ENCODE measurements at regions of chr10 and their contacts with region 1.

Region 1: GRCh38 chr10:102713814-102714620 is at the start of gene ARL3:
- DNase-seq: peak; percentile 96
- ATAC-seq: peak; percentile 87
- H3K4me3 ChIP-seq: peak within 1 kb of the TSS; percentile 67 to 94 (median 70)
- H3K4me3 Mint-ChIP-seq: peak within 1 kb of the TSS; percentile 92
- H3K27ac ChIP-seq: peak within 1 kb of the TSS; percentile 64 to 92
- H3K27ac Mint-ChIP-seq: peak within 1 kb of the TSS; percentile 93
- H3K4me1 ChIP-seq: peaks cover 15 to 21% of the 10 kb centered on the region in 2 donors
- H3K4me1 Mint-ChIP-seq: peaks cover 36% of the 10 kb centered on the region
- H3K27me3 ChIP-seq: no peaks in the 10 kb centered on the region
- H3K27me3 Mint-ChIP-seq: no peaks in the 10 kb centered on the region
- CTCF ChIP-seq: peak; percentile 72
- total RNA-seq, gene ARL3: 5.5 and 6.3 TPM in 2 replicates

Region 2: GRCh38 chr10:101042667-101043355 is 1671.2 kb before region 1 on chr10:
- CTCF ChIA-PET with region 1: no interaction called
- POLR2A ChIA-PET with region 1: interaction called, 10 read pairs
- intact Hi-C with region 1: no loop called
- DNase-seq: peak; percentile 88
- ATAC-seq: peak; percentile 90
- H3K4me3 ChIP-seq: peak overlapping the region; percentile 50 to 76 (median 68)
- H3K4me3 Mint-ChIP-seq: peak overlapping the region; percentile 100
- H3K27ac ChIP-seq: peak overlapping the region in 1 of 2 donors; percentile 76
- H3K27ac Mint-ChIP-seq: peak overlapping the region; percentile 90
- H3K4me1 ChIP-seq: peaks cover 6 to 15% of the 10 kb centered on the region in 2 donors
- H3K4me1 Mint-ChIP-seq: peaks cover 17% of the 10 kb centered on the region
- H3K27me3 ChIP-seq: peaks cover 0 to 22% (median 6%) of the 10 kb centered on the region in 4 experiments
- H3K27me3 Mint-ChIP-seq: peaks cover 19% of the 10 kb centered on the region
- CTCF ChIP-seq: no peak

Region 3: DNA sequence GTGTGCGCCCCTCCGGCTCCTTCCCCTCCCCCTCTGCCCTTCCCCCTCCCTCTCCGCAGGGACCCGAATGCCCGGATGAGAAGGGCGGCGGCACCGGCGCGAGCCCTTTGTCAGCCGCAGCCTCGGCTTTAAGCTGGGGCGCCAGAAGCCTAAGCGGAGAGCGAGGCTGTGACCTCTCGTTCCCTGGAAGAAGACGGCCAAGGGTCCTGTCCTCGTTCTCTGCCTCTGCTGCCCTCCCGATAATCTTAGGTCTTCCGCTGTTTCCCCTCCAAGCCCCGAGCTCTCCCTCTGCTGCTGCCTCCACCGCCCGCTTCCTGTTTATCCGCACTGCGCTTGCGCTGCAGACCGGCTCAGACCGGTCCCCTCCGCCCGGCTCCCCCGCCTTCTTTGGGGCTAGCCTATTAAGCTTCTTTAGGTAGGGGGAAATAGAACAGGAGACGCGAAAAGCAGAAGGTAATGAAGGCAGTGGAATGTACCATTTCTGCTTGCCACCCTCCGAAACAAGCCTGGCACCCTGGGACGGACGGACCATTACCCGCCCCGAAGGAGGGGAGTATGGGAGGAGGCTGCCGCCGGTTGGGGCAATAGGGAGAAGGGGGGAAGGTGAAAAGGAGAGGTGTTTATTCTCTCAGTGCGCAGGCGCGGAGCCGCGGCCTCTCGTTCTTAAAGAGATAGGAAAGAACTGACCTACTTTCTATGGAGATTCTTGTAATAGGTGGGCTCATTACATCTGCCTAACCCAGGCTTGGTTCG is 895.7 kb before region 1 on chr10 and contains the start of gene OGA:
- CTCF ChIA-PET with region 1: no interaction called
- POLR2A ChIA-PET with region 1: interaction called, 3 read pairs
- intact Hi-C with region 1: loop called (anchors 5 kb)
- DNase-seq: peak; percentile 98
- ATAC-seq: peak; percentile 87
- H3K4me3 ChIP-seq: peak within 1 kb of the TSS; percentile 56 to 97 (median 92)
- H3K4me3 Mint-ChIP-seq: peak within 1 kb of the TSS; percentile 94
- H3K27ac ChIP-seq: peak within 1 kb of the TSS; percentile 81 to 85
- H3K27ac Mint-ChIP-seq: peak within 1 kb of the TSS; percentile 99
- H3K4me1 ChIP-seq: peaks cover 27% of the 10 kb centered on the region in 2 donors
- H3K4me1 Mint-ChIP-seq: peaks cover 35% of the 10 kb centered on the region
- H3K27me3 ChIP-seq: no peaks in the 10 kb centered on the region
- H3K27me3 Mint-ChIP-seq: no peaks in the 10 kb centered on the region
- CTCF ChIP-seq: no peak
- total RNA-seq, gene OGA: 418 and 442 TPM in 2 replicates

Region 4: GRCh38 chr10:102245101-102245931 is 468.7 kb before region 1 on chr10 and contains the start of gene GBF1:
- CTCF ChIA-PET with region 1: no interaction called
- POLR2A ChIA-PET with region 1: no interaction called
- intact Hi-C with region 1: loop called (anchors 5 kb)
- DNase-seq: peak; percentile 98
- ATAC-seq: peak; percentile 86
- H3K4me3 ChIP-seq: peak within 1 kb of the TSS; percentile 80 to 99 (median 98)
- H3K4me3 Mint-ChIP-seq: peak within 1 kb of the TSS; percentile 94
- H3K27ac ChIP-seq: peak within 1 kb of the TSS; percentile 86 to 90
- H3K27ac Mint-ChIP-seq: peak within 1 kb of the TSS; percentile 38
- H3K4me1 ChIP-seq: peaks cover 50 to 51% of the 10 kb centered on the region in 2 donors
- H3K4me1 Mint-ChIP-seq: peaks cover 56% of the 10 kb centered on the region
- H3K27me3 ChIP-seq: peaks cover 0 to 31% (median 27%) of the 10 kb centered on the region in 4 experiments
- H3K27me3 Mint-ChIP-seq: peaks cover 23% of the 10 kb centered on the region
- CTCF ChIP-seq: no peak
- total RNA-seq, gene GBF1: 39.3 and 41.2 TPM in 2 replicates

Region 5: DNA sequence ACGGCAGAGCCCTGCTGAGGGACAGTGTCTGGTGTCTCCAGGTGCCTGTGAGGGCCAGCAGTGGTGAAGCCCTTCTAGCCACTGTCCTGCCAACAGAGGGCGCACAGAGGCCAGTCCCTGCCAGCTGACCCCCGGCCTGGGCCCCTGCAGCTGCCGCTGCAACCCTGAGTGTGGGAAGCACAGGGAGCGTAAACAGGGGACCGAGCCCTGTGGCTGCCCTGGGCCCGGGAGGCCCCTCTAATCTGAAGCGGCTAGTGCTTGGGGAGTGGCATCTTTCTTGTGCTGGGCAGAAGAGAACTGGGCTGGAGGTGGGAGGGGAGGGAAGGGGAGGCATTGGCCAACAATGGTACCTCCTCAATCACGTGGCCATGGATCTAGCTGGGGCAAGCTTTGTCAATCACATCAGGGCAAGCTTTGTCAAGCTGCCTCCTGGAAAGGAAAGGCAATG is 35.2 kb before region 1 on chr10:
- CTCF ChIA-PET with region 1: interaction called, 38 read pairs
- POLR2A ChIA-PET with region 1: interaction called, 4 read pairs
- intact Hi-C with region 1: loop called (anchors 5 kb)
- DNase-seq: peak; percentile 33
- ATAC-seq: peak; percentile 48
- H3K4me3 ChIP-seq: no peak overlapping the region
- H3K4me3 Mint-ChIP-seq: no peak overlapping the region
- H3K27ac ChIP-seq: peak overlapping the region in 1 of 2 donors; percentile 2
- H3K27ac Mint-ChIP-seq: no peak overlapping the region
- H3K4me1 ChIP-seq: peaks cover 24 to 27% of the 10 kb centered on the region in 2 donors
- H3K4me1 Mint-ChIP-seq: peaks cover 33% of the 10 kb centered on the region
- H3K27me3 ChIP-seq: no peaks in the 10 kb centered on the region
- H3K27me3 Mint-ChIP-seq: no peaks in the 10 kb centered on the region
- CTCF ChIP-seq: no peak

Region 6: GRCh38 chr10:102743588-102744373 is 29.8 kb after region 1 on chr10 and contains the start of gene WBP1L:
- CTCF ChIA-PET with region 1: interaction called, 14 read pairs
- POLR2A ChIA-PET with region 1: interaction called, 4 read pairs
- intact Hi-C with region 1: loop called (anchors 1 kb)
- DNase-seq: peak; percentile 98
- ATAC-seq: peak; percentile 95
- H3K4me3 ChIP-seq: peak within 1 kb of the TSS; percentile 70 to 96 (median 89)
- H3K4me3 Mint-ChIP-seq: peak within 1 kb of the TSS; percentile 89
- H3K27ac ChIP-seq: peak within 1 kb of the TSS; percentile 58 to 86
- H3K27ac Mint-ChIP-seq: peak within 1 kb of the TSS; percentile 88
- H3K4me1 ChIP-seq: peaks cover 24 to 25% of the 10 kb centered on the region in 2 donors
- H3K4me1 Mint-ChIP-seq: peaks cover 42% of the 10 kb centered on the region
- H3K27me3 ChIP-seq: peaks cover 0 to 2% (median 0%) of the 10 kb centered on the region in 4 experiments
- H3K27me3 Mint-ChIP-seq: no peaks in the 10 kb centered on the region
- CTCF ChIP-seq: peak; percentile 16
- total RNA-seq, gene WBP1L: 43.2 and 44.3 TPM in 2 replicates

Region 7: DNA sequence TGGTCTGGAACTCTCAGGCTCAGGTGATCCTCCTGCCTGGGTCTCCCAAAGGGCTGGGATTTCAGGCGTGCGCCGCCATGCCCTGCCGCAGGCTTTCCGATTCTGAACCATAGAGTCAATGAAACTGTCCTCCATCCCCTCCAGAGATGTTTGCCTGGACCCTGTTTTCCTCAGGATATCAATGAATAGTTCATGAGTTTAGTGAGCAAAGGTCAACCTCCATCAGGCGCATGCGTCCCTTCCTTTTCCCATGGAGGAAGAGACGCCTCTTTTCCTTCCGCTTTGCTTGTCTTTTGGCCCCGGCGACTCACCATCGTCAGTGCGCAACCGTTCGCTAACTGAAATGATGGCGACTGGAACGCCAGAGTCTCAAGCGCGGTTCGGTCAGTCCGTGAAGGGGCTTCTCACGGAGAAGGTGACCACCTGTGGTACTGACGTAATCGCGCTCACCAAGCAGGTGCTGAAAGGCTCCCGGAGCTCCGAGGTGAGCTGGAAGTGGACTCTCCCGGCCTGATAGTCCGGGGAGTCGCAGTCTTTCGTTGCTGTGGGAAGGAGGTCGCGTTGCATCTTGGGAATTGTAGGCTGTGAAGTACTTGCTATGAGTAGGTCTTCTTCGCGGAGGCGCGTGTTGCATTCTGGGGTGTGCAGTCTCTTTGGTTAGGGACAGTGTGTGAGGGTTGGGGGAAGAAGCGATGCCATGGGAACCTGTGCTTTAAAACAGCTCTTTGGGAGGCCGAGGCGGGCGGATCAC is 140.1 kb after region 1 on chr10 and contains the start of gene BORCS7:
- CTCF ChIA-PET with region 1: no interaction called
- POLR2A ChIA-PET with region 1: no interaction called
- intact Hi-C with region 1: loop called (anchors 1 kb)
- DNase-seq: peak; percentile 93
- ATAC-seq: peak; percentile 99
- H3K4me3 ChIP-seq: peak within 1 kb of the TSS; percentile 86 to 99 (median 98)
- H3K4me3 Mint-ChIP-seq: peak within 1 kb of the TSS; percentile 83
- H3K27ac ChIP-seq: peak within 1 kb of the TSS; percentile 84 to 91
- H3K27ac Mint-ChIP-seq: peak within 1 kb of the TSS; percentile 97
- H3K4me1 ChIP-seq: peaks cover 0 to 8% of the 10 kb centered on the region in 2 donors
- H3K4me1 Mint-ChIP-seq: peaks cover 12% of the 10 kb centered on the region
- H3K27me3 ChIP-seq: no peaks in the 10 kb centered on the region
- H3K27me3 Mint-ChIP-seq: no peaks in the 10 kb centered on the region
- CTCF ChIP-seq: no peak
- total RNA-seq, gene BORCS7: 20.8 and 21.8 TPM in 2 replicates

Measured in B cell (primary cell).